ENCODE measurements at regions of chr1 and their contacts with region 1.

Region 1: DNA sequence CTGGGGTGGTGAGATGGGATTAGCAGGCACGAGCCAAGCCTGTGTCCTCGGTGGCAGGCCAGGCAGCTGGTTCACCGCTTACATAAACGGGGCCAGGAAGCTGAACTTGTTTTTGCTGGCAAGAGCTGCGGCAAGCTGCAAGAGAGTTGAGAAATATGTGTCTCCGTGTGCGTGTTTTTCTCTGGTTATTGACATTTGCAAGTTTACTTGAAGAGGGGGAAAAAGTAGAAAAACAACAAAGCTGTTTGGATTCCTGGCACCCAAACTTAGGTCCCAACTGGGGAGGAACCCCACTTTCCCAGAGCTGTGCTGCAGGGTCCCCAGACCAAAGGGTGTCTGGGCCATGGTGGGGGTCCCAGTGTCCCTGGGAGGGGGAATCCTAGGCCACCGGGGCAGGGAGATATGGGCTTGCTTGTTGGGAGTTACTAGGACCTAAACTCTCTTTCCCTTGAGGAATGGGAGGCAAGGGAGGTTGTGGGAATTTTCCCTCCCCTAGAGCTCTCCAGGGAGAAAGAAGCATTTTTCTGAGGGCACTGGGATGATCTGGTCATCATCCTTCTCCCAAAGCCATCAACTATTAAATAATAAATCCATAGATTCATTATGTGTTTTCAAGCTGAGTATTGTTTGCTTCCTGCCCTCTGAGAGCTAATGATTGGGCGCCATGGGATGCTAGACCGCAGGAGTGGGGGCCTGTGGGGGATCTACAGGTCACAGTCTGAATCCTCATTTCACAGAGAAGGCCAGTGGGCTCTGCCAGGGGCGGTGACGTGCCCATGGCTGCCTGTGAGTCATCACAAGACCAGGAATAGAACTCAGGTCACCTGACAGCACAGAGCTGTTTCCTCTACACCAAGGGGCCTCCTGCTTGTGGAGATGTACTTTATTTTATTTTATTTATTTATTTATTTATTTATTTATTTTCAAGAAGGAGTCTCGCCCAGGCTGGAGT is 14.8 kb downstream of the IL6R start:
- DNase-seq: peak; percentile 98
- H3K4me3 Mint-ChIP-seq: peak overlapping the region; percentile 59
- H3K27ac Mint-ChIP-seq: peak overlapping the region; percentile 67
- H3K4me1 Mint-ChIP-seq: peaks cover 85% of the 10 kb centered on the region
- H3K27me3 Mint-ChIP-seq: no peaks in the 10 kb centered on the region
- CTCF ChIP-seq: no peak

Region 2: DNA sequence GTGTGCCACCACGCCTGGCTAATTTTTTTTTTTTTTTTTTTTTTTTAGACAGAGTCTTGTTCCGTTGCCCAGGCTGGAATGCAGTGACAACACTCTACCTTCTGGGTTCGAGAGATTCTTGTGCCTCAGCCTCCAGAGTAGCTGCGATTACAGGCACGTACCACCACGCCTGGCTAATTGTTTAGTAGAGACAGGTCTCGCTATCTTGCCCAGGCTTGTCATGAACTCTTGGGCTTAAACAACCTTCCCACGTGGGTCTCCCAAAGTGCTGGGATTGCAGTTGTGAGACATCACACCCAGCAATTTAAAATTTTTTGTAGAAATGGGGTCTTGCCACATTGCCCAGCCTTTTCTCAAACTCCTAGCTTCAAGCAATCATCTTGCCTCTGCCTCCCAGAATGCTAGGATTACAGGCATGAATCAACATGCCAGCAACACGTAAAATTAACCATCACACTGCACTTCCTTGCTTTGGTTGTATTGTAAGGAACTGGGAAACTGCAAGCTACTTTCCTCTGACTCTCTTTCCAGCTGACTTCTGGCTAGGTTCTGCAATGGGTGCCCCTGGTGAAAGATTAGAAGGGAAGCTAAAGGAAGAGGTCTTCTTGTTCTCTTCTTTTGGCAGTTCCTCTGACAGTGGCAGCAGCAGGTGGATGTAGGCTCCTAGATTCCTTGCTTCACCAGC is 28.7 kb before region 1 on chr1:
- CTCF ChIA-PET with region 1: interaction called, 4 read pairs
- POLR2A ChIA-PET with region 1: interaction called, 27 read pairs
- intact Hi-C with region 1: no loop called
- DNase-seq: peak; percentile 45
- H3K4me3 Mint-ChIP-seq: no peak overlapping the region
- H3K27ac Mint-ChIP-seq: peak overlapping the region; percentile 61
- H3K4me1 Mint-ChIP-seq: peaks cover 8% of the 10 kb centered on the region
- H3K27me3 Mint-ChIP-seq: no peaks in the 10 kb centered on the region
- CTCF ChIP-seq: no peak